Activated CD4-positive, alpha-beta T cell treated with anti-CD3 and anti-CD28 coated beads, Interleukin-2, amount 10 ng/mL, durations not matched to agents 24 days and 14 days (primary cell): ENCODE measurements at regions of chr20 and their contacts with region 1.

Region 1: GRCh38 chr20:45095753-45096371 is 5.1 kb downstream of the KCNS1 start:
- DNase-seq: peak; percentile 88
- H3K4me3 Mint-ChIP-seq: no peak overlapping the region
- H3K27ac Mint-ChIP-seq: no peak overlapping the region
- H3K4me1 Mint-ChIP-seq: peaks cover 5% of the 10 kb centered on the region
- H3K27me3 Mint-ChIP-seq: peaks cover 33% of the 10 kb centered on the region

Region 2: GRCh38 chr20:44960103-44960852 is 135.6 kb before region 1 on chr20 and contains the start of gene TOMM34:
- intact Hi-C with region 1: loop called (anchors 5 kb)
- DNase-seq: peak; percentile 99
- H3K4me3 Mint-ChIP-seq: peak within 1 kb of the TSS; percentile 97
- H3K27ac Mint-ChIP-seq: peak within 1 kb of the TSS; percentile 99
- H3K4me1 Mint-ChIP-seq: peaks cover 62% of the 10 kb centered on the region
- H3K27me3 Mint-ChIP-seq: no peaks in the 10 kb centered on the region
- total RNA-seq, gene TOMM34: 63.4 and 64.5 TPM in 2 replicates

Region 3: GRCh38 chr20:45011108-45011526 is 84.7 kb before region 1 on chr20:
- intact Hi-C with region 1: loop called (anchors 1 kb)
- DNase-seq: peak; percentile 79
- H3K4me3 Mint-ChIP-seq: no peak overlapping the region
- H3K27ac Mint-ChIP-seq: peak overlapping the region; percentile 4
- H3K4me1 Mint-ChIP-seq: peaks cover 31% of the 10 kb centered on the region
- H3K27me3 Mint-ChIP-seq: no peaks in the 10 kb centered on the region

Region 4: DNA sequence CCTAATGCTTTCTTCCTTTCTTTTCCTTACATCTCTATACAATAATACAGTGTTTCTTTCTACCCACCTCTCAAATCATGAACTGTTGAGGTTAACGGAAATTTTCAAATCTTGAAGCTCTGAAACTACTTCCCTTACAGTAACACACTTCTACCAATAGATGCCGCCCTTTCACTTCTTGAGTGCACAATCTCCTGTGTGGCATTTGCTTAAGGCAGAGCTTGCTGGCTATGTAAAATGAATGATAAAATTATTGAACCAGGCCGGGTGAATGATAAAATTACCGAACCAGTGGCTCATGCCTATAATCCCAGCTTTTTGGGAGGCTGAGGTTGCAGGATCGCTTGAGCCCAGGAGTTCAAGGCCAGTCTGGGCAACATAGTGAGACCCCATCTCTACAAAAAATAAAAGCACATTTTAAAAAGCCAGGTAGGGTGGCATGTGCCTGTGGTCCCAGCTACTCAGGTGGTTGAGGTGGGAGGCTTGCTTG is 51.7 kb before region 1 on chr20:
- intact Hi-C with region 1: loop called (anchors 1 kb)
- DNase-seq: peak; percentile 83
- H3K4me3 Mint-ChIP-seq: no peak overlapping the region
- H3K27ac Mint-ChIP-seq: peak overlapping the region; percentile 65
- H3K4me1 Mint-ChIP-seq: peaks cover 36% of the 10 kb centered on the region
- H3K27me3 Mint-ChIP-seq: no peaks in the 10 kb centered on the region

Region 5: GRCh38 chr20:45293041-45294002 is 197.5 kb after region 1 on chr20:
- intact Hi-C with region 1: loop called (anchors 5 kb)
- DNase-seq: peak; percentile 96
- H3K4me3 Mint-ChIP-seq: peak overlapping the region; percentile 81
- H3K27ac Mint-ChIP-seq: no peak overlapping the region
- H3K4me1 Mint-ChIP-seq: peaks cover 13% of the 10 kb centered on the region
- H3K27me3 Mint-ChIP-seq: peaks cover 32% of the 10 kb centered on the region